Activated CD4-positive, alpha-beta memory T cell treated with anti-CD3 and anti-CD28 coated beads for 36 hours (primary cell): ENCODE measurements at regions of chr3 and their contacts with region 1.

Region 1: GRCh38 chr3:45688882-45689756 is at the start of gene SACM1L:
- DNase-seq: peak; percentile 98
- H3K4me3 Mint-ChIP-seq: peak within 1 kb of the TSS; percentile 75
- H3K27ac Mint-ChIP-seq: peak within 1 kb of the TSS; percentile 85
- H3K4me1 Mint-ChIP-seq: peaks cover 44% of the 10 kb centered on the region
- H3K27me3 Mint-ChIP-seq: peaks cover 4% of the 10 kb centered on the region
- total RNA-seq, gene SACM1L: 64.3 to 71.2 TPM

Region 2: GRCh38 chr3:44338010-44338827 is 1350.9 kb before region 1 on chr3 and contains the start of gene TCAIM:
- CTCF ChIA-PET with region 1: no interaction called
- POLR2A ChIA-PET with region 1: no interaction called
- intact Hi-C with region 1: loop called (anchors 10 kb)
- DNase-seq: peak; percentile 99
- H3K4me3 Mint-ChIP-seq: peak within 1 kb of the TSS; percentile 98
- H3K27ac Mint-ChIP-seq: peak within 1 kb of the TSS; percentile 97
- H3K4me1 Mint-ChIP-seq: peaks cover 22% of the 10 kb centered on the region
- H3K27me3 Mint-ChIP-seq: peaks cover 6% of the 10 kb centered on the region
- total RNA-seq, gene TCAIM: 17.2 to 17.9 TPM

Region 3: DNA sequence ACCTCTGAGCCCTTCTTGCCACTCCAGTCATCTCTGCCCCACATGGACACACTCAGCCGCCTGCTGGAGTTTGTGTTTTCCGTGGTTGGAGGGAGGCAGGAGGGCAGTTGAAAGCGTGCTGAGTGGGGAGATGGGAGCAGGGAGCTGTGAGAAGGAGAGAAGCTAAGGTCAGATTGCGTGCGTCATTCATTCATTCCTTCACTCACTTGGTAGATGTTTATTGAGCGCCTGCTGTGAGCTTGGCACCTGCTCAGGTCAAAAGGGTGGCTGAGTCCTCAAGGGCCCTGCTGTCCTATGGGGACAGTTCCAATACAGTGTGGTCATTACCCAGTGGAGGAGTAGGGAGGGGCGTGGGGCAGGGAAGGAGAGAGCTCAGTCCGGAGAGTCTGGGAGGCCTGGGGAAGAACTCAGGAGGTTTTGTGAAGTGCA is 71.0 kb before region 1 on chr3:
- CTCF ChIA-PET with region 1: no interaction called
- POLR2A ChIA-PET with region 1: no interaction called
- intact Hi-C with region 1: no loop called
- DNase-seq: no peak
- H3K4me3 Mint-ChIP-seq: no peak overlapping the region
- H3K27ac Mint-ChIP-seq: no peak overlapping the region
- H3K4me1 Mint-ChIP-seq: peaks cover 6% of the 10 kb centered on the region
- H3K27me3 Mint-ChIP-seq: no peaks in the 10 kb centered on the region

Region 4: DNA sequence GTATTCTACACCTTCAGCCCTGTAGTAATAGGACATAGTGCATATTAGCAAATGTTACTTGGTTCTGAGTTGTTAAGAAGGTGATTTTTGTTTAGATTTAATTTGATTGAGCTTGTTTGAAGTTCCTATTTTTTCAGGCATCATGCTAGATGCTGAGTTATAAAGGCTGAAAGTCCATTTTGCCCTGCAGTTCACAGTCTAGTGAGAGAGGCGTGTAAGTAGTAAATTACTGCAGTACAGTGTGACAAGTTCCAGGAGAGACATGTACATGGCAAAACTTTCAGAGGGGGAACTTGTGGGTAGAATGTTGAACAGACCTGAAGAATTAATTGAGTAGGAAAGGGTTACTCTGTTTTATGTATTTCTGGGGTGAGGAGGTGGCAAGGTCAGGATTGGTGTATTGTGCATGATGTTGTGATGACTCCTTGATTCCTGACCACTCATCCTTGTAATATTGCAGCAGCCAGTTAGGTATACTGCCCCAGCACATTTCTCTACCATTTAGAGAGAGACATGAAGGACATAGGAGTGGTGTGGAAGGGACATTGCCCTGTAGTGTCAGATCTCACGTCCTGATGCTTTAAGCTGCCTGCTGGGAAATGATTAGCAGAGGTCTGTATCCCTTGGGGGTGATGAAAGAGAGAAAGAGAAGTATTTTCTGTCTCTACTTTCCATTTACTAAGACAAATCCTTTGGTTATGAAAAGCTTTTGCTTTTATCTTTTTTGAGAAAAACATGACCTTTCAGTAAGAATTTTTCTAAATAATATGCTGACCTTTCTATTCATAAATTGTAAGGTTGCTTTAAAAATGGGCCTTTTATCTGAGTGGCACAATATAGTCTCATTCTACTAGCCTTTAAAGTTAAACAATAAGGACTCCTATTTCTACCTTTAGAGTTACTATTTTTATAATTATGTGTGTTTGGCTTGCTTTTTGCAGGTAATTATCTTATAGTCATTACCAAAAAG is 17.0 kb after region 1 on chr3:
- CTCF ChIA-PET with region 1: interaction called, 10 read pairs
- POLR2A ChIA-PET with region 1: interaction called, 11 read pairs
- intact Hi-C with region 1: no loop called
- DNase-seq: no peak
- H3K4me3 Mint-ChIP-seq: no peak overlapping the region
- H3K27ac Mint-ChIP-seq: peak overlapping the region; percentile 56
- H3K4me1 Mint-ChIP-seq: peaks cover 45% of the 10 kb centered on the region
- H3K27me3 Mint-ChIP-seq: no peaks in the 10 kb centered on the region

Region 5: DNA sequence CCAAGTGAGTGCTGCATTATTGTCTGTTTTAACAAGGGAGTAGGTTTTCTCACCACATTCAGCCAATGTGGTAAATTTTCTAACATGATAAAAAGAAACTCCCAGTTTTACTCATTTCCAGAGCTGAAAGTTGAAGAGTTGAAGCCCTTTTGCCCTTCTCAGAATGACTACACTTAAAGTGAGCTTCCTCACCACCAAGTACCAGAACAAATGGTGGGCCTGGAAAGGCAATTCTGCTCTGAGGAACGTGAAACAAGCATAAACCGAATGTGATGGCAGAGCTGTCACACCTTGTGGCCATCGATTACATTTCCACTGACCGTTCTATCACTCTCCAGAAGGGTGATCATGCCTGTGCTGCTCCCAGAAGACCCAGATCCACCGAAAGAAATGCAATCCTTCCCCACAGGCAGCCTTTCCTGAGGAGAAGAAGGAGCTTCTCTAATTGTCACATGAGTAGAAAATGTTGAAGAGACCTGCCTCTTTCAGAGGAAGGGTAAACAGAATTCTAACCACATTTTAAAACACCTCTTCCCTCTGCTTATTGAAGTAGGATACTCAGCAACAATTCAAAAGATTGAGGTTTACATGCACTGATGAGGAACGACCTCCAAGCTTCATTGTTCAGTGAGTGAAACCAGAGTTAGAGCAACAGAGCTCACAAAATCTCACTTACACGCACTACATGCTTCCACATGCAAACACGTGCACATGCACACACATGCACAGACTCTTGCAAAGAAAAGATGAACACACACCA is 175.8 kb after region 1 on chr3:
- CTCF ChIA-PET with region 1: no interaction called
- POLR2A ChIA-PET with region 1: no interaction called
- intact Hi-C with region 1: loop called (anchors 5 kb)
- DNase-seq: peak; percentile 50
- H3K4me3 Mint-ChIP-seq: no peak overlapping the region
- H3K27ac Mint-ChIP-seq: no peak overlapping the region
- H3K4me1 Mint-ChIP-seq: peaks cover 51% of the 10 kb centered on the region
- H3K27me3 Mint-ChIP-seq: peaks cover 60% of the 10 kb centered on the region

Region 6: GRCh38 chr3:46089237-46090011 is 400.3 kb after region 1 on chr3:
- CTCF ChIA-PET with region 1: no interaction called
- POLR2A ChIA-PET with region 1: no interaction called
- intact Hi-C with region 1: loop called (anchors 10 kb)
- DNase-seq: peak; percentile 65
- H3K4me3 Mint-ChIP-seq: no peak overlapping the region
- H3K27ac Mint-ChIP-seq: no peak overlapping the region
- H3K4me1 Mint-ChIP-seq: peaks cover 19% of the 10 kb centered on the region
- H3K27me3 Mint-ChIP-seq: peaks cover 33% of the 10 kb centered on the region